Right cardiac atrium (tissue), 5 donors: ENCODE measurements at regions of chr14 and their contacts with region 1.

Region 1: DNA sequence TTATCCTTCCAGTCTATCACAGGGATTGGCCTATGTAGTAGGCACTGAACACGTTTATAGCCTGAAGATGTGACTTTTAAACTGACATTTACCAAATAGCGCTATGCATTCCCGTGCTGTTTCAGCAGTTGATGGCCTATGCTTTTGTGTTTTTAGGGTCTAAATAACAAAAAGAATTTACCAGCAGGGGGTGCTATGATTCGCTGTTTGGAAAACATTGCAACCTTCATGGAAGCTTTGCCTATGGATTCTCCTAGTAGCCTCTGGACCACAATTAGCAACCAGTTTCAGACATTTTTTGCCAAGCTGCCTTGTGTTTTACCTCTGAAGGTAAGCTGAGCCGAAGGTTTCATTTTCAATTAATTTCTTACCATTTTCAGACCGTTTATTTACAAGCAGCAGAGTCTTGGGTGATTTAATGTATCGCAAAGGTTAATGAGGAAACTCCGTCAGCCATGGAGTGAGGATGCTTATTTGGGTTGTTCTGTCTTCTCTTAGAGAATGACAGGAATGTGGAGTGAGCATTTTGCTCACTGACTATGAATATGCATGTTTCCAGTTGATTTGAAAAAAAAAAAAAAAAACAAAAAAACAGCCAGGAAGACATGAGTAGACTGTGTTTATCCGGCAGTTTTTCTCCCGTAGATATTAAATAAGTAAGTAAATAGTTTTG is 133.1 kb downstream of the PRIMA1 start:
- DNase-seq: no peak
- ATAC-seq: no peak
- H3K4me3 ChIP-seq: no peak overlapping the region
- H3K27ac ChIP-seq: no peak overlapping the region
- H3K4me1 ChIP-seq: no peaks in the 10 kb centered on the region
- H3K27me3 ChIP-seq: no peaks in the 10 kb centered on the region

Region 2: GRCh38 chr14:92612988-92613658 is 1042.1 kb before region 1 on chr14:
- intact Hi-C with region 1: no loop called
- DNase-seq: peak in 2 of 3 donors; percentile 63 to 69
- ATAC-seq: peak in 1 of 2 donors; percentile 26
- H3K4me3 ChIP-seq: no peak overlapping the region
- H3K27ac ChIP-seq: no peak overlapping the region
- H3K4me1 ChIP-seq: no peaks in the 10 kb centered on the region
- H3K27me3 ChIP-seq: no peaks in the 10 kb centered on the region

Region 3: GRCh38 chr14:93772263-93772662 is 117.0 kb after region 1 on chr14:
- intact Hi-C with region 1: no loop called
- DNase-seq: peak in 1 of 3 donors; percentile 32
- ATAC-seq: peak; percentile 68 to 81
- H3K4me3 ChIP-seq: no peak overlapping the region
- H3K27ac ChIP-seq: peak overlapping the region; percentile 15
- H3K4me1 ChIP-seq: no peaks in the 10 kb centered on the region
- H3K27me3 ChIP-seq: no peaks in the 10 kb centered on the region

Region 4: DNA sequence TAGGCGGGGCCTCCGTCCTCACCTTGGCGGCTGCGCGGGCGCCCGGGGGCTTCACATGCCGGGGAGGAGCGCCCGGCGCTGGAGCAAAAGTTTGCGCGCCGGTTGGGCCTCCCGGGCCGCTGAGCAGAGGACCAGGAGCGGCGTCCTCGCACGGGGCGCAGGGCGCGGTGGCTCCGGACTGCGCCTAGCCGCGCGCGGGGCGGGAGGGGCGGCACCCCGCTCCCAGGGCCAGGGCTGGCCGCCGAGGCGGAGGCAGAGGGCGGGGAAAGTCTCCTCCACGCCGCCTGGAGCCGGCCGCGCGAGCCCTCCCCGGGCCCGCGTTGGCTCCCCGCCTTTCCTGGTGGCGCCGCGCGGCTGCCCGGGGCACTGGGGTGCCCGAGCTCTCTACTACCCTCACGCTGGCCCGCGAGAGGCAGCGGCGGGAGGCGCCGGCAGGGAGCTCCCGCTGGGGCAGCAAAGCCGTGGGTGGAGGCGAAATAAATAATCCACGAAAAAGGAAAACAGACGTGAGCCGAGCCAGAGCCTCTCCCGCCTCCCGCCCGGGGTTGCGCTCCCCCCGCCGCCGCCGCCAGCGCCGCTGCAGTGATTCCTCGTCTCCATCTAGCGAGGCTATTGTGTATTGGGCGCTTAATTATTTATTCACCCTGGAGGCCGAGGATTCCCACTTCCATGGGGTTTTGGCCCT is 133.5 kb after region 1 on chr14:
- intact Hi-C with region 1: loop called (anchors 2 to 10 kb)
- DNase-seq: peak; percentile 55 to 87 (median 83)
- ATAC-seq: peak; percentile 92 to 95
- H3K4me3 ChIP-seq: peak overlapping the region; percentile 56
- H3K27ac ChIP-seq: peak overlapping the region; percentile 70
- H3K4me1 ChIP-seq: no peaks in the 10 kb centered on the region
- H3K27me3 ChIP-seq: no peaks in the 10 kb centered on the region

Region 5: GRCh38 chr14:93892923-93893558 is 237.8 kb after region 1 on chr14:
- intact Hi-C with region 1: loop called (anchors 5 kb)
- DNase-seq: peak; percentile 77 to 93 (median 89)
- ATAC-seq: peak; percentile 37 to 60
- H3K4me3 ChIP-seq: no peak overlapping the region
- H3K27ac ChIP-seq: peak overlapping the region; percentile 9
- H3K4me1 ChIP-seq: no peaks in the 10 kb centered on the region
- H3K27me3 ChIP-seq: no peaks in the 10 kb centered on the region